ENCODE measurements at regions of chr2 and their contacts with region 1.

Region 1: GRCh38 chr2:56183643-56184499 is at the start of gene CCDC85A:
- DNase-seq: peak; percentile 92
- ATAC-seq: peak; percentile 71
- H3K4me3 Mint-ChIP-seq: peak within 1 kb of the TSS; percentile 75
- H3K27ac Mint-ChIP-seq: no peak within 1 kb of the TSS
- H3K4me1 Mint-ChIP-seq: peaks cover 25% of the 10 kb centered on the region
- H3K27me3 Mint-ChIP-seq: peaks cover 98% of the 10 kb centered on the region
- CTCF ChIP-seq: peak; percentile 90
- total RNA-seq, gene CCDC85A: 0.22 to 0.27 TPM (median 0.25 TPM) in 3 replicates

Region 2: GRCh38 chr2:56077352-56077915 is 106.4 kb before region 1 on chr2:
- CTCF ChIA-PET with region 1: interaction called, 13 read pairs
- POLR2A ChIA-PET with region 1: no interaction called
- DNase-seq: peak; percentile 63
- ATAC-seq: peak; percentile 80
- H3K4me3 Mint-ChIP-seq: no peak overlapping the region
- H3K27ac Mint-ChIP-seq: no peak overlapping the region
- H3K4me1 Mint-ChIP-seq: no peaks in the 10 kb centered on the region
- H3K27me3 Mint-ChIP-seq: no peaks in the 10 kb centered on the region; the same call in 1 of the 2 replicates
- CTCF ChIP-seq: peak; percentile 28; the same call in 1 of the 2 replicates

Region 3: DNA sequence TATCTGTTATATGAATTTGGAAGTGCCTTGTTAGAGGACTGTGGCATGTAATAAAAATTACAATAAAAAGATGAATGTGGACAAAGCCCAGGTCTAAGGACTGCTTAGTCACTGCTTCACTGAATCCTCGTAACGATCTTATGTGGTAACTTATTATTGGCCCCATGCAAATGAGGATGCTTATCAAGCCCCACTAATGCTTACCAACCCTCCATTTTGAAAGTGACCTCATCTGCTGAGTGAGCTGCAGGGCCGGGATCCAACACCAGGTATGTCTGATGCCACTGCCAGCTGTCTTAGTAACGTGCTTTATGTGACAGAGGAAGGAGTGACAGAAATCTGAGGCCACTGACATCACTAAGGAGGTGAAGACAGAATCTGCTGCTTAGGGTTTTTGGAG is 65.4 kb before region 1 on chr2:
- CTCF ChIA-PET with region 1: interaction called, 10 read pairs
- POLR2A ChIA-PET with region 1: no interaction called
- DNase-seq: no peak
- ATAC-seq: peak; percentile 45
- H3K4me3 Mint-ChIP-seq: peak overlapping the region; percentile 65
- H3K27ac Mint-ChIP-seq: peak overlapping the region; percentile 91
- H3K4me1 Mint-ChIP-seq: peaks cover 57% of the 10 kb centered on the region
- H3K27me3 Mint-ChIP-seq: no peaks in the 10 kb centered on the region
- CTCF ChIP-seq: no peak

Region 4: GRCh38 chr2:56151841-56152240 is 32.0 kb before region 1 on chr2:
- CTCF ChIA-PET with region 1: interaction called, 14 read pairs
- POLR2A ChIA-PET with region 1: no interaction called
- DNase-seq: no peak
- ATAC-seq: no peak
- H3K4me3 Mint-ChIP-seq: no peak overlapping the region
- H3K27ac Mint-ChIP-seq: no peak overlapping the region
- H3K4me1 Mint-ChIP-seq: no peaks in the 10 kb centered on the region
- H3K27me3 Mint-ChIP-seq: no peaks in the 10 kb centered on the region
- CTCF ChIP-seq: no peak

Region 5: GRCh38 chr2:56217106-56217505 is 33.2 kb after region 1 on chr2:
- CTCF ChIA-PET with region 1: interaction called, 17 read pairs
- POLR2A ChIA-PET with region 1: no interaction called
- DNase-seq: peak; percentile 12
- ATAC-seq: peak; percentile 90
- H3K4me3 Mint-ChIP-seq: no peak overlapping the region
- H3K27ac Mint-ChIP-seq: no peak overlapping the region
- H3K4me1 Mint-ChIP-seq: peaks cover 5% of the 10 kb centered on the region; the same call in 1 of the 2 replicates
- H3K27me3 Mint-ChIP-seq: no peaks in the 10 kb centered on the region; the same call in 1 of the 2 replicates
- CTCF ChIP-seq: no peak

Region 6: GRCh38 chr2:56749152-56749752 is 565.4 kb after region 1 on chr2:
- CTCF ChIA-PET with region 1: interaction called, 11 read pairs
- POLR2A ChIA-PET with region 1: no interaction called
- DNase-seq: no peak
- ATAC-seq: no peak
- H3K4me3 Mint-ChIP-seq: no peak overlapping the region
- H3K27ac Mint-ChIP-seq: no peak overlapping the region
- H3K4me1 Mint-ChIP-seq: no peaks in the 10 kb centered on the region
- H3K27me3 Mint-ChIP-seq: no peaks in the 10 kb centered on the region
- CTCF ChIP-seq: peak; percentile 28; the same call in 1 of the 2 replicates

Measured in WTC11 (cell line).